ENCODE measurements at regions of chr15 and their contacts with region 1.

Region 1: DNA sequence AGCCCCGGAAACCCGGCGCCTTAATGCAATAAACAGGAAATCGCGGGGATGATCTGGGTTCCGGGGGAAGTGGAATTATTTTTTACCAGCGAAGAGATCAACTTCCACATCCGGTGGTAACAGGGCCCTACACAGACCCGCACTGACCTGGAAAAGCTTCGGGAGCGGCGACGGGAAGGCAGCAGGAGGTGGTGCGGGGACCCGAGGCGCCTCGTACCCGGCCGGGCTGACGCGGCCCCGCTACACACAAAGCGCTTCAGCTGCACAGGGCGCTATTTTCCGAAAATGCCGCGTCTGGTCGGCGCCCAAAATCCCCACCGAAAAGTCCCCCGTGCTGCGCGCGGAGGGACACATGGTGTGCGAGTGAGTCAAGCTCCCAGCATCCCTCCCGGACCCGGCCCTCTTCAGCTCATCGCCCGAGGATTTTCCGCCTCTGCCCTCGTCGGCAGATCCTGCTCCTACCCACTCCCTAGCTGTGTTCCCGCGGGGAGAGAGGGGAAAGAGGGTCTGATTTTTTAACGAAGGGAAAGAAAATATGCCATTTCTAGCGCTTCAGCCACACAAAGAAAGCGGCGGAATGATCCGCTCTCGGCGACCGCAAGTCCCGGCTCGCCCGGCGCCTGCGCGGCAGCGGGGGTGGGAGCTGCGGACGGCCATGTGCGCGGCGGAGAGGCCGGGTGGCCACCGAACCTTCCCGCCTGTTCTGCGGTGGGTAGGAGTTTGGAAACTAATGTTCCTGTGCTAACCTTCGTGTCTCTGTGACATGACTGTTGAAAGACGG is at the start of gene GABPB1:
- DNase-seq: peak; percentile 90
- ATAC-seq: peak; percentile 46
- H3K4me3 Mint-ChIP-seq: peak within 1 kb of the TSS; percentile 90
- H3K27ac Mint-ChIP-seq: peak within 1 kb of the TSS; percentile 95
- H3K4me1 Mint-ChIP-seq: peaks cover 33% of the 10 kb centered on the region
- H3K27me3 Mint-ChIP-seq: no peaks in the 10 kb centered on the region
- CTCF ChIP-seq: no peak
- total RNA-seq, gene GABPB1: 33.2 to 36.2 TPM

Region 2: GRCh38 chr15:50256188-50257041 is 98.6 kb before region 1 on chr15:
- CTCF ChIA-PET with region 1: interaction called, 4 read pairs
- POLR2A ChIA-PET with region 1: interaction called, 28 read pairs
- intact Hi-C with region 1: no loop called
- DNase-seq: no peak
- ATAC-seq: no peak
- H3K4me3 Mint-ChIP-seq: no peak overlapping the region
- H3K27ac Mint-ChIP-seq: no peak overlapping the region
- H3K4me1 Mint-ChIP-seq: peaks cover 26% of the 10 kb centered on the region
- H3K27me3 Mint-ChIP-seq: no peaks in the 10 kb centered on the region
- CTCF ChIP-seq: no peak

Region 3: DNA sequence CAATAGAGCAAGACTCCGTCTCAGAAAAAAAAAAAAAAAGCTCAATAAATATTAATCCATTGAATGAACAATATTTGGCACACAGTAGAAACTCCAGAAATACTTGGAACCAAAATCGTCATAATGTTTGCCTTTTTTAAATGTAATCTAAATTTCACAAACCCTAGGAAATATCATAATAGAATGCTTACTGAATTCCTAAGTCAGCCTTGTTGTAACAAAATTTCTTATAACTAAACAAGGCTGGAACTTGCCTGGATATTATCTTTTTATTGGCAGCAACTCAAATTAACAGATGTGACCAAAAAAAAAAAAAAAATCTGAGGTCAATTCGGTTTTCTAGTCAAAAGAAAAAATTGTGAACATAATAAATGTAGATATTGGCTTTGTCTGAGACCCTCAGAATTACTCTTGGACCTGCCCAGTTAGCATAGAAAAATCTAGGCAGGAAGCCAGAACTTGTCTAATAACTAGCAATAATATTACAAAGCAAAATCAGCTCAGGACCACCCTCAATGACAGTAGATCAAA is 33.3 kb before region 1 on chr15:
- CTCF ChIA-PET with region 1: no interaction called
- POLR2A ChIA-PET with region 1: no interaction called
- intact Hi-C with region 1: no loop called
- DNase-seq: no peak
- ATAC-seq: no peak
- H3K4me3 Mint-ChIP-seq: no peak overlapping the region
- H3K27ac Mint-ChIP-seq: no peak overlapping the region
- H3K4me1 Mint-ChIP-seq: peaks cover 12% of the 10 kb centered on the region
- H3K27me3 Mint-ChIP-seq: no peaks in the 10 kb centered on the region
- CTCF ChIP-seq: no peak

Region 4: GRCh38 chr15:50377867-50378751 is 23.1 kb after region 1 on chr15:
- CTCF ChIA-PET with region 1: interaction called, 3 read pairs
- POLR2A ChIA-PET with region 1: interaction called, 24 read pairs
- intact Hi-C with region 1: no loop called
- DNase-seq: no peak
- ATAC-seq: peak; percentile 95
- H3K4me3 Mint-ChIP-seq: peak overlapping the region; percentile 1
- H3K27ac Mint-ChIP-seq: peak overlapping the region; percentile 86
- H3K4me1 Mint-ChIP-seq: peaks cover 18% of the 10 kb centered on the region
- H3K27me3 Mint-ChIP-seq: no peaks in the 10 kb centered on the region
- CTCF ChIP-seq: no peak

Region 5: GRCh38 chr15:50452927-50453326 is 97.9 kb after region 1 on chr15:
- CTCF ChIA-PET with region 1: no interaction called
- POLR2A ChIA-PET with region 1: no interaction called
- intact Hi-C with region 1: no loop called
- DNase-seq: no peak
- ATAC-seq: no peak
- H3K4me3 Mint-ChIP-seq: no peak overlapping the region
- H3K27ac Mint-ChIP-seq: peak overlapping the region; percentile 16
- H3K4me1 Mint-ChIP-seq: peaks cover 2% of the 10 kb centered on the region
- H3K27me3 Mint-ChIP-seq: no peaks in the 10 kb centered on the region
- CTCF ChIP-seq: no peak

Region 6: GRCh38 chr15:50484781-50485180 is 129.8 kb after region 1 on chr15:
- CTCF ChIA-PET with region 1: no interaction called
- POLR2A ChIA-PET with region 1: interaction called, 6 read pairs
- intact Hi-C with region 1: loop called (anchors 10 kb)
- DNase-seq: no peak
- ATAC-seq: no peak
- H3K4me3 Mint-ChIP-seq: no peak overlapping the region
- H3K27ac Mint-ChIP-seq: peak overlapping the region; percentile 21
- H3K4me1 Mint-ChIP-seq: peaks cover 29% of the 10 kb centered on the region
- H3K27me3 Mint-ChIP-seq: no peaks in the 10 kb centered on the region
- CTCF ChIP-seq: no peak

Region 7: GRCh38 chr15:50908210-50909009 is 553.4 kb after region 1 on chr15 and contains the start of gene AP4E1:
- CTCF ChIA-PET with region 1: no interaction called
- POLR2A ChIA-PET with region 1: interaction called, 6 read pairs
- intact Hi-C with region 1: loop called (anchors 10 kb)
- DNase-seq: peak; percentile 94
- ATAC-seq: peak; percentile 67
- H3K4me3 Mint-ChIP-seq: peak within 1 kb of the TSS; percentile 81
- H3K27ac Mint-ChIP-seq: peak within 1 kb of the TSS; percentile 100
- H3K4me1 Mint-ChIP-seq: peaks cover 15% of the 10 kb centered on the region
- H3K27me3 Mint-ChIP-seq: no peaks in the 10 kb centered on the region
- CTCF ChIP-seq: peak; percentile 92
- total RNA-seq, gene AP4E1: 16.6 TPM